Sigmoid colon (tissue), 7 donors: ENCODE measurements at regions of chr9 and their contacts with region 1.

Region 1: GRCh38 chr9:4792572-4793458 is at the start of gene RCL1:
- DNase-seq: peak; percentile 97
- H3K4me3 ChIP-seq: peak within 1 kb of the TSS; percentile 83 to 98 (median 87)
- H3K27ac ChIP-seq: peak within 1 kb of the TSS; percentile 77 to 90 (median 82)
- H3K4me1 ChIP-seq: peaks cover 0 to 26% (median 12%) of the 10 kb centered on the region in 4 donors
- H3K27me3 ChIP-seq: no peaks in the 10 kb centered on the region
- CTCF ChIP-seq: no peak
- EP300 ChIP-seq: no peak
- POLR2A ChIP-seq: peak; percentile 16 to 59
- total RNA-seq, gene RCL1: 19.7 to 24.1 (median 21.9) TPM

Region 2: DNA sequence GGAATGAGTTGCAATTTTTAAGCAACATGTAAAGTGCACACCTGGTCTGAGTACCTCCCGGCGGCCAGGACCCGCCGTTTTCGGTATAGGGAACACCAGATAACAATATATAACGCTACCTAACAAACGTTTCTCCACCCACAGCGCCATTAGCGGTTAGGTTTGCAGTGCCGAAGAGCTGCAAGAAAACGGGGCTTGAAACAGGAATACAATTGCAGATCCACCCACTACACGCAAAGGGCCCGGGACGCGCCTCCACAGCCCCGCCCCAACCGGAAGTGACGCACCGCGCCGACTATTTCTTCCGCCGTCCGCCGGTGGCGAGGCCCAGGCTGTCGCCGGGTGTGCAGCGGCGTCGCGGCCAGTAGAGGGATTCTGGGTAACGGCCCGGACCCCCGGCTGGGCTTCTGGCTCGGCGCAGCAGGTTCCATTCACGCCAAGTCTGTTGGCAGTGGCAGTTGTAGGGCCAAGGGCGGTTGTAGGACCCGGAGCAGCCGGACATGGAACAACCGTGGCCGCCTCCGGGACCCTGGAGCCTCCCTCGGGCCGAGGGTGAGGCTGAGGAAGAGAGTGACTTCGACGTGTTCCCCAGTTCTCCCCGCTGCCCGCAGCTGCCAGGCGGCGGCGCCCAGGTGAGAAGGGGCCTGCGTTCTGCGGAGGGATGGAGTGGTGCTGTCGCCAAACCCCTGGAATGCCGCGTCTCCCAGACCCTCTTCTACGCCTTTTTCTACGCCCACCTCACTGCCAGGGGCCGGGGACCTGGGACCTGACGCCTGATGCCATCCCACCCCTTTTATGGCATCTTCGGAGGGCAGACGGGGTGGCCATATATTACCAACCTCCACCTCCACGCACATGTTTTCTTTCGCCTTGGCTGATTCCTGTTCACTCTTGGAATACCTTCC is 113.3 kb before region 1 on chr9 and contains the start of gene CDC37L1:
- intact Hi-C with region 1: loop called (anchors 5 kb)
- DNase-seq: peak; percentile 99
- H3K4me3 ChIP-seq: peak within 1 kb of the TSS; percentile 69 to 96 (median 82)
- H3K27ac ChIP-seq: peak within 1 kb of the TSS; percentile 93 to 99 (median 98)
- H3K4me1 ChIP-seq: peaks cover 0 to 40% (median 21%) of the 10 kb centered on the region in 4 donors
- H3K27me3 ChIP-seq: no peaks in the 10 kb centered on the region
- CTCF ChIP-seq: peak; percentile 70 to 82 (median 76)
- EP300 ChIP-seq: peak in 2 of 4 donors; percentile 34 to 64
- POLR2A ChIP-seq: peak; percentile 95 to 96
- total RNA-seq, gene CDC37L1: 30.7 to 40.6 (median 33.3) TPM

Region 3: DNA sequence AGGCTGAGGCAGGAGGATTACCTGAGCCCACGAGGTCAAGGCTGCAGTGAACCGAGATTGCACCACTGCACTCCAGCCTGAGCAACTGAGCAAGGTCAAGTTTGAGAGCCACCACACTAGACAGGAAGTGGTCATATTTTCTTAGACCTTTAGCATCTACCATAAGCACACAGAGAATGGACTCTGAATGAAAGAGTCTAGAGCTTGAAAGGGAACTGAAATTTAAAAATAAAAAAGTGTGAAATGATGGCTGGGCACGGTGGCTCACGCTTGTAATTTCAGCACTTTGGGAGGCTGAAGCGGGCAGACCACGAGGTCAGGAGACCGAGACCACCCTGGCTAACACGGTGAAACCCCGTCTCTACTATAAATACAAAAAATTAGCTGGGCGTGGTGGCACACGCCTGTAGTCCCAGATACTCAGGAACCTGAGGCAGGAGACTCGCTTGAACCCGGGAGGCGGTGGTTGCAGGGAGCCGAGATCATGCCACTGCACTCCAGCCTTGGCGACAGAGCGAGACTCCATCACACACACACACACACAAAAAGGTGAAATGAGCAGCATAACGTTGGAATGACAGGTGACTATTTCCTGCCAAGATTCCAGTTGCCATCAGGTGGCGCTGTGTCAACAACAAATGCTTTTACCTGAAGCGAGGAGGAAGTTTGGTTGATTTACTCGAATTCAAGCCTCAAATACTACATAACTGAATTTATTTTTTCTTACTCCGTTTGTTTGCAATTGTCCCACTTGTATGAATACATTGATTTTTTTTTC is 30.5 kb before region 1 on chr9:
- intact Hi-C with region 1: loop called (anchors 2 kb)
- DNase-seq: peak; percentile 84
- H3K4me3 ChIP-seq: peak overlapping the region in 2 of 4 donors; percentile 4 to 10
- H3K27ac ChIP-seq: peak overlapping the region in 2 of 4 donors; percentile 2 to 46
- H3K4me1 ChIP-seq: peaks cover 0 to 8% (median 5%) of the 10 kb centered on the region in 4 donors
- H3K27me3 ChIP-seq: peaks cover 0 to 12% (median 0%) of the 10 kb centered on the region in 3 donors
- CTCF ChIP-seq: peak; percentile 37 to 89 (median 72)
- EP300 ChIP-seq: no peak
- POLR2A ChIP-seq: no peak

Region 4: GRCh38 chr9:5437254-5438216 is 644.7 kb after region 1 on chr9 and contains the start of gene PLGRKT:
- intact Hi-C with region 1: loop called (anchors 10 kb)
- DNase-seq: peak; percentile 98
- H3K4me3 ChIP-seq: peak within 1 kb of the TSS; percentile 49 to 71 (median 70)
- H3K27ac ChIP-seq: peak within 1 kb of the TSS; percentile 84 to 94 (median 92)
- H3K4me1 ChIP-seq: peaks cover 0 to 16% (median 15%) of the 10 kb centered on the region in 4 donors
- H3K27me3 ChIP-seq: no peaks in the 10 kb centered on the region
- CTCF ChIP-seq: peak in 1 of 4 experiments; percentile 10
- EP300 ChIP-seq: no peak
- POLR2A ChIP-seq: peak; percentile 80 to 89
- total RNA-seq, gene PLGRKT: 14.1 to 25.0 (median 19.7) TPM